K562 (cell line): ENCODE measurements at regions of chr17 and their contacts with region 1.

Region 1: GRCh38 chr17:5100832-5101231 is 10.8 kb downstream of the ZNF232 start:
- DNase-seq: no peak
- ATAC-seq: no peak
- H3K4me3 ChIP-seq: no peak overlapping the region
- H3K27ac ChIP-seq: no peak overlapping the region
- H3K4me1 ChIP-seq: no peaks in the 10 kb centered on the region
- H3K27me3 ChIP-seq: peaks cover 0 to 14% of the 10 kb centered on the region in 2 experiments; a peak in 3 of 5 replicates
- CTCF ChIP-seq: no peak
- EP300 ChIP-seq: no peak
- POLR2A ChIP-seq: no peak
- RAD21 ChIP-seq: no peak

Region 2: DNA sequence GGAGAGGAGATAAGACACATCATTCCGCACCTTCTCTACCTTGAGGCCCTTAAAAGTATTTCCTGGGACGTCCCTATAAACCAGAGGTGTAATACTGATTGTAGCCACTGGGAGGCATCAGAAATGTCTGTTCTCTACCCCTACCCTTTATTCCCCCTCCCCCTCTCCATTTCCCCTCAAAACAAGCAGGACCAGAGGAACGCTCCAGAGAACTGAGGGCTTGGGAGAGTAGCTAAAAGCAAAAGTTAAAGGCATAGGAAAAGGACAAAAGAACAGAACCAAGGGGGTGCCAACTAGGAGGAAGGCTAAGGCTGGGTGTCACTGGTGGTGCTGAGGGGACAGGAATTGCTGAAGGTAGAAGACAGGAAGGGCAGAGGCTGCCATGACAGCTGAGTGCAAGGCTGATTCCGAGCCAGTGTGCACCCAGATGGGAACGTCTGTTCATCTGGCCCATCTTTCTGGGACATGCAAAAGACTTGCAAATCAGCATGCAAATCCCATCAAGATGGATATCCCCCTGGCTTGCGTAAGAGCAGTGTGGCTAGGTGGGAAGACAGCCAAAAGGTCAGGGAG is 120.1 kb before region 1 on chr17:
- CTCF ChIA-PET with region 1: no interaction called
- POLR2A ChIA-PET with region 1: no interaction called
- in situ Hi-C with region 1: no loop called
- intact Hi-C with region 1: no loop called
- DNase-seq: peak; percentile 60 to 66 (median 66)
- ATAC-seq: peak; percentile 90
- H3K4me3 ChIP-seq: no peak overlapping the region
- H3K27ac ChIP-seq: no peak overlapping the region
- H3K4me1 ChIP-seq: peaks cover 0 to 6% of the 10 kb centered on the region in 2 experiments; a peak in 1 of 5 replicates
- H3K27me3 ChIP-seq: no peaks in the 10 kb centered on the region
- CTCF ChIP-seq: peak; percentile 54 to 64 (median 60); a peak in 5 of 6 replicates
- EP300 ChIP-seq: no peak
- POLR2A ChIP-seq: no peak
- RAD21 ChIP-seq: peak in 1 of 2 experiments; percentile 52; a peak in 2 of 4 replicates

Region 3: GRCh38 chr17:5184288-5184687 is 83.5 kb after region 1 on chr17:
- CTCF ChIA-PET with region 1: no interaction called
- POLR2A ChIA-PET with region 1: interaction called, 3 read pairs
- in situ Hi-C with region 1: no loop called
- intact Hi-C with region 1: loop called (anchors 10 kb)
- DNase-seq: no peak
- ATAC-seq: no peak
- H3K4me3 ChIP-seq: no peak overlapping the region
- H3K27ac ChIP-seq: no peak overlapping the region
- H3K4me1 ChIP-seq: no peaks in the 10 kb centered on the region
- H3K27me3 ChIP-seq: no peaks in the 10 kb centered on the region
- CTCF ChIP-seq: no peak
- EP300 ChIP-seq: no peak
- POLR2A ChIP-seq: no peak
- RAD21 ChIP-seq: no peak